ENCODE measurements at regions of chr19 and their contacts with region 1.

Region 1: DNA sequence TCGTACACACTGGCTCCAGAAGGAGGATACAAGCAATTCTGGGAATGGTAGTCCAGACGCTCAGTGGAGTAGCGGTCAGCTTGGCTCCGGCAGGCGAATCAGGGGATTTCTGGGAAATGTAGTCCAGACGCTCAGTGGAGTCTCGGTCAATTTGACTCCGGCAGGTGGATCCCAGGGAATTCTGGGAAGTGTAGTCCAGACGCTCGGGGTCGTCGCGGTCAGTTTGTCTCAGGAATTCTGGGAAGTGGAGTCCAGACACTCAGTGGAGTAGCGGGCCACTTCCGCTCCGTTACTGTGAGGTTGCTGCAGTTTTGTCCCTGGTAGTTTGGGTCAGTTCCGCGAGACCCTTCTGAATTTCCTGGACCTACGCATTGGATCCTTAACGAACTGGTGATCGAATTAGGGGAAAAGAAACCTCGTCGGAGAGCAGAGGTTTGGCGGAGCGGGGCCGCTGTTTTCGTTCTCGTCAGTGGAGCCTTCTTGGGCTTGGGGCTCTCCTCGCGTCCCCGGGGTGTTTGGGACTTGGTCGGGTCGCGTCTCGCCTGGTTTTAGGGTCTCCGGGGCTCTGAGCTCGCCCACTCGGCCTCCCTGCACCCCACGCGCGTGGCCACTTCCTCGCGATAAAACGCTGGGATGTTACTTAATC is at the start of gene ZNF225:
- DNase-seq: peak; percentile 95
- ATAC-seq: peak; percentile 99
- total RNA-seq, gene ZNF225: 3.2 to 3.3 TPM

Region 2: GRCh38 chr19:44304659-44305193 is 191.5 kb after region 1 on chr19 and contains the start of gene ZNF235:
- intact Hi-C with region 1: loop called in 1 of 2 experiments (anchors 5 kb)
- DNase-seq: peak; percentile 97
- ATAC-seq: peak; percentile 100
- total RNA-seq, gene ZNF235: 3.3 to 4.3 TPM

Measured in left cardiac atrium (tissue), 4 donors.